Heart left ventricle (tissue), 16 donors: ENCODE measurements at regions of chr1 and their contacts with region 1.

Region 1: DNA sequence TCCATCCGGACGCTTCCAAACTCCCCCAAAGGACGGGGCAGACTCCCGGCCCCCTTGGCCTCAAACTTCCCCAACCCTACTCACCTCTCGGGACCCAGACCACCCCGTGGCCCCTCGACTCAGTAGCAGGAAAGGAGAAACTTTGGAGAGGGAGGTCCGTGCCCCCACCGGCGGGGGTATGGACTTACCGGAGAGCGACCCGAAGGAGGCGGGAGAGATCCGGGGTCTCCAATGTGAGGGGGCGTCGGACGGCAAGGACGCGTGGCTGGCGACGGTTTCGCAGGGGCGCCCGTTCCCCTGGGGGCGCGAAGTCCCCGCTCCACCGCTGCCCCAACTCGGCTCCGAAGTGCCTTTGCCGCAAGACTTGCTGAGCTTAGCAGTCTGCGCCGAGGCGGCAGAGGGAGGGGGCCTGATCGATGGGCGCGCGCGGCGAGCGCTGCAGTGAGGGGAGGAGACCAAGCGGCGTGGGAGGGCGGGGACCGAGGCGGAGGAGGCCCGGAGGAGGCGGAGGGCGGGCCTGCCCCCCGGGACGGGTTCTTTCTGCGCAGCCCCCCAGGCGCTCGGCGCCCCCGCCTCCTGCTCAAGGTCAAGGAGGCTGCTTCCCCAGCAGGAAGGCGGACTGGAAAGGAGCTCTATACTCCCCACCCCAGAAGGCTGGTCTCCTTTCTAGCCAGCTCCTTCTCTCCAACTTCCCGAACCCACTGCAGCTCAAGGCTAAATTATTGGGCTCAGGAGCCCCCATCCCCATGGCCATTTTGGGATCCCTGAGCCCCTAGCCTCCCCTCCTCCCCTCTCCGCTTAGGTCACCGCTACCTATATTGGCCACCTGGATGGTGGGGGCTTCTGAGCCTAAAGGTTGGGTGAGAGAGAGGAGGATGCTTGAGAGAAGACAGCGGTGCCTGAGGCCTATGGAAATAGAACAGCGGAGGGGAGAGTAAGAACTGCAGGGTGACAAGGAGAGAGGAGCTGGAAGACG is at the start of gene SYT2:
- DNase-seq: peak in 3 of 5 donors; percentile 27 to 70 (median 38)
- ATAC-seq: peak in 3 of 4 donors; percentile 33 to 54 (median 45)
- H3K4me3 ChIP-seq: peak within 1 kb of the TSS in 11 of 12 donors; percentile 22 to 48 (median 34)
- H3K27ac ChIP-seq: no peak within 1 kb of the TSS
- H3K4me1 ChIP-seq: peaks cover 0 to 19% (median 10%) of the 10 kb centered on the region in 12 donors
- H3K27me3 ChIP-seq: peaks cover 21 to 97% (median 30%) of the 10 kb centered on the region in 9 donors
- CTCF ChIP-seq: no peak
- POLR2A ChIP-seq: no peak
- total RNA-seq, gene SYT2: 0.03 to 0.09 (median 0.07) TPM in 4 of 9 donors, not detected in the others

Region 2: GRCh38 chr1:202164271-202165037 is 545.9 kb before region 1 on chr1:
- intact Hi-C with region 1: loop called in 1 of 10 experiments (anchors 5 kb)
- DNase-seq: peak in 1 of 5 donors; percentile 60
- ATAC-seq: peak in 2 of 4 donors; percentile 11 to 18
- H3K4me3 ChIP-seq: no peak overlapping the region
- H3K27ac ChIP-seq: peak overlapping the region in 1 of 12 donors; percentile 62
- H3K4me1 ChIP-seq: peaks cover 0 to 59% (median 0%) of the 10 kb centered on the region in 12 donors
- H3K27me3 ChIP-seq: no peaks in the 10 kb centered on the region
- CTCF ChIP-seq: no peak
- POLR2A ChIP-seq: no peak

Region 3: DNA sequence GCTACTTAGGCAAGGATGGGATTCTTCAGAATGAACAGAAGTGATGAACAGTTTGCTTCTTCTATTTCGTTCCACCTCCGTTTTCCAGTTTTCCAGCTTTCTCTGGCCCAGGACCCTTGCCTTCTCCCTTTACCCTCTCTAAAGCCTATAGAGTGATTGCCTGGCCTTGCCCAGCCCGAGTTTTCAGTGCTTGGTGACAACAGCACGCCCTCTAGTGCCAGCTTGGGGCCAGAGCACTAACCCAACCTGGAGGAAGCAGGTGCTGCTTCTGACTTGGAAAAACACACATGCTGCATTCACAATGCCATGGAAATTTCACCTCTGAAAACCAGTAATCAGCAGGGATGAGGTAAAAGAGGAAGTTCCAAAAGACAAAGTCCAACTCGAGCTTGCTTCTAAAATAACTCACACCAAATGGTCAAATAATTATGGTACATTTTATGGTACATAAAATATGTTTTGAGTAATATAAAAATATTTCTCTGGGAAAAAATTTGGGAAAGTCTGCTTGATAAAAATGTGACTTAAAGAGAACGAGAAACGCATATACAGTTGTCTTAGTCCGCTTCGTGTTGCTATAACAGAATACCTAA is 394.7 kb before region 1 on chr1:
- intact Hi-C with region 1: loop called in 3 of 10 experiments (anchors 5 to 10 kb)
- DNase-seq: peak; percentile 62 to 85 (median 69)
- ATAC-seq: peak in 3 of 4 donors; percentile 82 to 83 (median 83)
- H3K4me3 ChIP-seq: no peak overlapping the region
- H3K27ac ChIP-seq: no peak overlapping the region
- H3K4me1 ChIP-seq: peaks cover 0 to 8% (median 0%) of the 10 kb centered on the region in 12 donors
- H3K27me3 ChIP-seq: no peaks in the 10 kb centered on the region
- CTCF ChIP-seq: peak; percentile 75 to 90 (median 86)
- POLR2A ChIP-seq: no peak

Region 4: DNA sequence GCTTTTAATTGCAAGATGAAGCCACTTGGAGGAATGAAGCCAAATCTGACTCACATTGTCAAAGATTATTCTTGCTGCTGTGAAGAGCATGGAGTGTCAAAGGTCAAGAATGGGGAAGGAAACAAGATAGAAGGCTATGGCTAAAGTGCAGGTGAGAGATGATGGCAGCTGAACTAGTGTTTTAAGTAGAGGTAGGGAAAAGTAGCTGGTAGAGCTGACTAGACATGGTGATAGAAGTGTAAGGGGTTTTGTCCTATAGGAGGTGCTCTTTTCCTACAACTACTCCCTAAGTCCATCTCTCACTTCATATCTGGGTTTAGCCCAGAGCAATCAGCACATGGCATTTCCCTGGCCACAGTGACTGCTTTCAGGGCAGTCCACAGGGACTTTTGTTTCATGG is 380.5 kb before region 1 on chr1:
- intact Hi-C with region 1: loop called in 2 of 10 experiments (anchors 10 kb)
- DNase-seq: no peak
- ATAC-seq: peak in 3 of 4 donors; percentile 33 to 44 (median 33)
- H3K4me3 ChIP-seq: no peak overlapping the region
- H3K27ac ChIP-seq: no peak overlapping the region
- H3K4me1 ChIP-seq: peaks cover 0 to 10% (median 0%) of the 10 kb centered on the region in 12 donors
- H3K27me3 ChIP-seq: no peaks in the 10 kb centered on the region
- CTCF ChIP-seq: peak in 3 of 12 donors; percentile 8 to 16 (median 13)
- POLR2A ChIP-seq: no peak

Region 5: GRCh38 chr1:202462342-202463076 is 247.8 kb before region 1 on chr1:
- intact Hi-C with region 1: loop called in 6 of 10 experiments (anchors 5 to 10 kb)
- DNase-seq: peak in 2 of 5 donors; percentile 44 to 50
- ATAC-seq: peak; percentile 44 to 81 (median 68)
- H3K4me3 ChIP-seq: peak overlapping the region in 11 of 12 donors; percentile 18 to 65 (median 47)
- H3K27ac ChIP-seq: peak overlapping the region; percentile 47 to 97 (median 76)
- H3K4me1 ChIP-seq: peaks cover 0 to 46% (median 11%) of the 10 kb centered on the region in 12 donors
- H3K27me3 ChIP-seq: peaks cover 0 to 14% (median 0%) of the 10 kb centered on the region in 9 donors
- CTCF ChIP-seq: no peak
- POLR2A ChIP-seq: no peak

Region 6: GRCh38 chr1:202471246-202471645 is 239.1 kb before region 1 on chr1:
- intact Hi-C with region 1: loop called in 4 of 10 experiments (anchors 10 kb)
- DNase-seq: no peak
- ATAC-seq: no peak
- H3K4me3 ChIP-seq: peak overlapping the region in 3 of 12 donors; percentile 3 to 14 (median 7)
- H3K27ac ChIP-seq: peak overlapping the region in 3 of 12 donors; percentile 10 to 61 (median 22)
- H3K4me1 ChIP-seq: peaks cover 0 to 32% (median 5%) of the 10 kb centered on the region in 12 donors
- H3K27me3 ChIP-seq: peaks cover 0 to 49% (median 0%) of the 10 kb centered on the region in 9 donors
- CTCF ChIP-seq: no peak
- POLR2A ChIP-seq: no peak

Region 7: DNA sequence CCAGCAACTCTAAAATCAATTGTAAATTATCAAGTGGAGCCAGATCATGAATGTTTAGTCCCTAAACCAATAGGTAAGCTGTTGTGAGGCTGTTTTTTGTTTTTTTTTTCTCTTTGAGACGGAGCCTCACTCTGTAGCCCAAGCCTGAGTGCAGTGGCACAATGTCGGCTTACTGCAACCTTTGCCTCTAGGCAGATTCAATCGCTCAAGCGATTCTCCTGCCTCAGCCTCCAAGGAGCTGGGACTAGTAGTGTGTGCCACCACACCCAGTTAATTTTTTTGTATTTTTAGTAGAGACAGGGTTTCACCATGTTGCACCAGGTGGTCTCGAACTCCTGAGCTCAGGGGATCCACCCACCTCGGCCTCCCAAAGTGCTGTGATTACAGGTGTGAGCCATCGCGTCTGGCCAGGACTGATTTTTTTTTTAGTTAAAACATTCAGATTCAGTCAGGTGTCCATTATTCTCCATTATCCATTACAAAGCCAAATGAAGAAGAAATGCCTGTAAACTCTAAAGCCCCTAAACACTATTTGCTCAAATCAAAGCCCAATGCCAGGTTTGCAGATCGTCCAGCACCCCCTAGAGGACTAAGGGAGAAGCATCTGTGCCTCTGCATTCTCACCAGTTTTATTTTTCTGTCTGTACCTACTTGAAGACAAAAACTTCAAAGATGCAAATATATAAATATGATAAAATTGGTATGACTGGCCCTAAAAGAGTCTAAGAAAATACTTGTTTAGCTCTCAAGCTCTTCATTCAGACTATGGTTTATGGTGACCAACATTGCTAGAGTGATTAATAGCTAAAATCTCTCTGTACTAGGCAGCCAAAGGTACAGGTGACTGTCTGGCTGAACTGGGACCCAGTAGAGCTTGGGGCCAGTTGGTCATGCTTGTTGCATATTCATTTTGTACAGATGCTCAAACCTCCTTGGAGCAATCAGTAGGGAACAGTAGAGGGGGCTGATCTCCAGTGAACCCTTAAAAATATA is 138.7 kb before region 1 on chr1:
- intact Hi-C with region 1: loop called in 1 of 10 experiments (anchors 10 kb)
- DNase-seq: no peak
- ATAC-seq: no peak
- H3K4me3 ChIP-seq: no peak overlapping the region
- H3K27ac ChIP-seq: peak overlapping the region in 2 of 12 donors; percentile 27 to 78
- H3K4me1 ChIP-seq: peaks cover 0 to 81% (median 28%) of the 10 kb centered on the region in 12 donors
- H3K27me3 ChIP-seq: no peaks in the 10 kb centered on the region
- CTCF ChIP-seq: peak; percentile 54 to 85 (median 71)
- POLR2A ChIP-seq: no peak

Region 8: DNA sequence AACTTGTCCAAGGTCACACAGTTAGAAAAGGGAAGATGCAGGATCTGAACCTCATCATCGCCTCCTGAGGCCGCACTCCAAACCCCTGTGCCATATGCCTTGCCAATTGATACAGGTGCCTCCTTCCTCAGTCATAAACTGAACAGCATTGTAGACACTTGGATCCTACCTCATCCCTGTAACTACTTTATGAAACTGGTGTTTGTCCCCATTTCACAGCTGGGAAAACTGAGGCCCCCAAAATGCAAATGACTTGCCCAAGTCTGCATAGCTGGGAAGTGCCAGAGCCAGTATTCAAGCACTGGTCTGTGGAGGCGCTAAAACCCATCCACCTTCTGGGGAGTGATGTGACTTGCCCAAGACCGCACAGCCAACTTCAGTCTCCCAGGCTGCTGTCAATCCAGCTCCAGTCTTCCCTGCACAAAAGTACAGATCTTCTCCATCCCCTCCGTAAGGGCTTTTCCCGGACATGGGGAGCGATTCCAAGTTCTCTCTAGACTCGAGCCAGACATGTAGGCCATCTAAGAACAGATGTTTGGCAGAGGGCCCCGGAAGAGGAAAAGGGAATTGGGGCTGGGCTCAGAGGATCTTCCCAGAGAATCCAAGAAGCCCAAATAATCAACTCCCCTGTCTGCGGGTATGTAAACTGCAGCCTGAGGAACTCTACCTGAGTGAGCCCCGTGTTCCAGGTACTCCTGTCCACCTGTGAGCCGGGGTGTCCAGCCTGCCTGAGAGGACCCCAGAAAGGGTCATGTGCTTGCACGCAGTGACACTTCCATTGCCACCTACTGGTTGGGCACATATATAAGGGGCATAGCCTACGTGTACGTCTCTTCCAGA is 60.6 kb before region 1 on chr1:
- intact Hi-C with region 1: no loop called
- DNase-seq: no peak
- ATAC-seq: no peak
- H3K4me3 ChIP-seq: no peak overlapping the region
- H3K27ac ChIP-seq: no peak overlapping the region
- H3K4me1 ChIP-seq: no peaks in the 10 kb centered on the region
- H3K27me3 ChIP-seq: peaks cover 0 to 99% (median 0%) of the 10 kb centered on the region in 9 donors
- CTCF ChIP-seq: no peak
- POLR2A ChIP-seq: no peak